ENCODE measurements at regions of chr6 and their contacts with region 1.

Region 1: DNA sequence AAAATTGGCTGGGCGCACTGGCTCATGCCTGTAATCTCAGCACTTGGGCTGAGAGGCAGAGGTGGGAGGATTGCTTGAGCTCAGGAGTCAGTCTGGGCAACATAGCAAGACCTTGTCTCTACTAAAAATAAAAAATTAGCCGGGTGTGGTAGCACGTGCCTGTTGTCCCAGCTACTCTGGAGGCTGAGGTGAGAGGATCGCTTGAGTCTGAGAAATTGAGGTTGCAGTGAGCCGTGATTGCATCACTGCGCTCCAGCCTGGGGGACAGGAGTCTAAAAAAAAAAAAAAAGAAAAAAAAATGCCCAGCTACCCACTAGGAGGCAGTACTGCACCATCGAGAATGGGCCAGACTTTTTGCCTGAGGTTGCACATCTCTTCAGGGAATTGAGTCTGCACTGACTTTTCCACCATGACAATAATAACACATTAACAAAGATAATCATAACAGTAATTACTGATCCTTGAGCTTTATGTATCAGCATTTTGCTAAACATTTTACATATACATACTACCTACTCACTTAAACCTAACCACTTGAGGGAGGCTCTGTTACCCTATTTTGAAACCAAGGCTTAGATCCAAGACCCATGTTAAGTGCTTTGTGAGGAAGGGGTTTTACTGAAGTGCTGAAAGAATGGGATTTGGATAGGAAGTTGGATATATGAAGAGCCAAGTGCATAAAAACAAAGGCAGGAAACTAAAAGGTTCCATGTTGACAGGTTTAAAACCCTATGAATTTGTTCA is 21.0 kb downstream of the SRSF3 start:
- DNase-seq: peak; percentile 80
- H3K4me3 Mint-ChIP-seq: no peak overlapping the region
- H3K27ac Mint-ChIP-seq: no peak overlapping the region
- H3K4me1 Mint-ChIP-seq: peaks cover 15% of the 10 kb centered on the region
- H3K27me3 Mint-ChIP-seq: no peaks in the 10 kb centered on the region
- CTCF ChIP-seq: peak; percentile 74

Region 2: GRCh38 chr6:36594029-36594815 is 21.0 kb before region 1 on chr6 and contains the start of gene SRSF3:
- CTCF ChIA-PET with region 1: interaction called, 6 read pairs
- POLR2A ChIA-PET with region 1: interaction called, 203 read pairs
- intact Hi-C with region 1: no loop called
- DNase-seq: peak; percentile 98
- H3K4me3 Mint-ChIP-seq: peak within 1 kb of the TSS; percentile 84
- H3K27ac Mint-ChIP-seq: peak within 1 kb of the TSS; percentile 99
- H3K4me1 Mint-ChIP-seq: peaks cover 20% of the 10 kb centered on the region
- H3K27me3 Mint-ChIP-seq: no peaks in the 10 kb centered on the region
- CTCF ChIP-seq: no peak
- total RNA-seq, gene SRSF3: 364 and 479 TPM in 2 replicates

Region 3: DNA sequence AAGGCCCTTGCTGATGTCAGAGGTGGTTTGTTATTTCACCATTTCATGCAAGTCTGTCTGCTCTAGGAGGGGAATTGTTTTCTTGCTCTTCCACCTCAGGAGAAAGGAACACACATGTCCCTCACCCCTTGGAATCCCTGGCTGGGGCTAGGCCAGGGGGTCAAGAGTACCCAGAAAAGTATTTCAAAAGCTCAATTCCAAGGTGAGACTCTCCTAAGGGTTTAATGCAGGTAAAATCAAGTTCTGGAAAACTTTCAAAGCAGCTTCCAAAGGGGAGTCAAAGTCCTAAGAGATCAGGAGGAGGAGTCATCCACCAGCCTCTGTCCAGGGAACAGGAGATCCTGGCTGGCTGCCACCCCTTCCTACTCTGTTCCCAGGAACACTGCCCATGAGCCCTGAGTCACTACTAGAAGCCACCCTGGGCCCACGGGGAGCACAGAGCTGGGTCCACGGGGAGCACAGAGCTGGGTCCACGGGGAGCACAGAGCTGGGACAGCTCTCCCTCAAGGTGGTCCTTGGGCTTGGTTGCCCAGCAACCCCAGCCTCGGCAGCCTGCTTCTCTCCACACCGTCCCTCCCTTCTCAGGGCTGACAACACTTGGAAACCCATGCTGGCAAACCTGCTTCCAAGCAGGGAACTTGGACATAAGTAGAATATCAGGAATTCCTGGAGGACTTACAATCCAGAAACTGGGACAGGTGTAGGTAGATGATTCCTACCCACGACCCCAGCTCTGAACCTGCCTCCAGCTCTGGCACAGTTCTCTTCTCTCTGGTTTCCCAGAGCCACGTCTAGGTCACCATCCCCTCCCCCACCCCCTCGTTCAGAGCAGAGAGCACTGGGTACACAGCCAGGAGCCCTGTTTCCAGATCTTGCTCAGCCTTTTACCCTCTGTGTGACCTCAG is 28.0 kb after region 1 on chr6:
- CTCF ChIA-PET with region 1: no interaction called
- POLR2A ChIA-PET with region 1: interaction called, 10 read pairs
- intact Hi-C with region 1: no loop called
- DNase-seq: peak; percentile 95
- H3K4me3 Mint-ChIP-seq: no peak overlapping the region
- H3K27ac Mint-ChIP-seq: peak overlapping the region; percentile 31
- H3K4me1 Mint-ChIP-seq: peaks cover 14% of the 10 kb centered on the region
- H3K27me3 Mint-ChIP-seq: no peaks in the 10 kb centered on the region
- CTCF ChIP-seq: no peak

Region 4: GRCh38 chr6:36666726-36667591 is 51.8 kb after region 1 on chr6:
- CTCF ChIA-PET with region 1: interaction called, 4 read pairs
- POLR2A ChIA-PET with region 1: interaction called, 10 read pairs
- intact Hi-C with region 1: no loop called
- DNase-seq: peak; percentile 98
- H3K4me3 Mint-ChIP-seq: no peak overlapping the region
- H3K27ac Mint-ChIP-seq: peak overlapping the region; percentile 91
- H3K4me1 Mint-ChIP-seq: peaks cover 31% of the 10 kb centered on the region
- H3K27me3 Mint-ChIP-seq: no peaks in the 10 kb centered on the region
- CTCF ChIP-seq: no peak

Region 5: DNA sequence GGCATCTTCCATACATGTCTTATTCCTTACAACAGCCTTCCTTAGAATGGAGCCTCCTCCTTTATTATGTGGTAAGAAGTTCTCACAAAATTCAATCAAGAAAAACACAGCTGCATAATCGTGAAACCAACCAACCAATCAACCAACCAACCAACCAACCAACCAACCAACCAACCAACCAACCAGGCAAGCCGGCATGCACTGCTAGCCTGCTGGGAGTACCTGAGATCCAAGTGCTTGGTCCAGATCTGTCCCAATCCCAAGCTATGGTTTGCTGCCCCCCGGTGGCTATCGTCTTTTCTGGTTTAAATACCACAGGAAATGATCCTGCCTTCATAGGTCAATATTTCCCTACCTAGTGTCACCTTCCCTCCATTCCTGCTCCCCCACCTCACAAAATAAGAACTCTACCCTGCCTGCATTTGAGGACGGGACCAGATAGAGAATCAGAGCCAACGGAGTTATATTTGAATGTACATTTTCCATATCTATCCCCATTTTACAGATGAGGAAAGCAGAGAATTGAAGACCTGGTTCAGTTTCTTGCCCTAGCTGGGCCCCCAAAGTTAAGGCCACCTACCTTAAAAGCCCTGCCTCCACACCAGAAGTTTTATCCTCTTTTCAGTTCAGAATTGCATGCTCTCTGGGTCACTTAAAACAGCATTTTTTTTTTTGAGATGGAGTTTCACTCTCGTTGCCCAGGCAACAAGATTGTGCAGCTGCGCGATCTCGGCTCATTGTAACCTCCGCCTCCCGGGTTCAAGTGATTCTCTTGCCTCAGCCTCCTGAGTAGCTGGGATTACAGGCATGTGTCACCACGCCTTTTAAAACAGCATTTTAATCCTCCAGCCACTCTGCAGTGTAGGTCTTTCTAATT is 109.6 kb after region 1 on chr6:
- CTCF ChIA-PET with region 1: interaction called, 25 read pairs
- POLR2A ChIA-PET with region 1: interaction called, 5 read pairs
- intact Hi-C with region 1: loop called (anchors 1 kb)
- DNase-seq: peak; percentile 82
- H3K4me3 Mint-ChIP-seq: no peak overlapping the region
- H3K27ac Mint-ChIP-seq: no peak overlapping the region
- H3K4me1 Mint-ChIP-seq: peaks cover 18% of the 10 kb centered on the region
- H3K27me3 Mint-ChIP-seq: no peaks in the 10 kb centered on the region
- CTCF ChIP-seq: peak; percentile 71

Region 6: GRCh38 chr6:36752886-36753506 is 137.8 kb after region 1 on chr6:
- CTCF ChIA-PET with region 1: interaction called, 37 read pairs
- POLR2A ChIA-PET with region 1: interaction called, 12 read pairs
- intact Hi-C with region 1: no loop called
- DNase-seq: no peak
- H3K4me3 Mint-ChIP-seq: no peak overlapping the region
- H3K27ac Mint-ChIP-seq: no peak overlapping the region
- H3K4me1 Mint-ChIP-seq: peaks cover 6% of the 10 kb centered on the region
- H3K27me3 Mint-ChIP-seq: no peaks in the 10 kb centered on the region
- CTCF ChIP-seq: no peak

Region 7: GRCh38 chr6:36820700-36821580 is 205.8 kb after region 1 on chr6:
- CTCF ChIA-PET with region 1: no interaction called
- POLR2A ChIA-PET with region 1: no interaction called
- intact Hi-C with region 1: no loop called
- DNase-seq: peak; percentile 14
- H3K4me3 Mint-ChIP-seq: no peak overlapping the region
- H3K27ac Mint-ChIP-seq: peak overlapping the region; percentile 44
- H3K4me1 Mint-ChIP-seq: peaks cover 9% of the 10 kb centered on the region
- H3K27me3 Mint-ChIP-seq: no peaks in the 10 kb centered on the region
- CTCF ChIP-seq: no peak

Measured in MCF 10A (cell line).